SK-N-SH (cell line): ENCODE measurements at regions of chr12 and their contacts with region 1.

Region 1: DNA sequence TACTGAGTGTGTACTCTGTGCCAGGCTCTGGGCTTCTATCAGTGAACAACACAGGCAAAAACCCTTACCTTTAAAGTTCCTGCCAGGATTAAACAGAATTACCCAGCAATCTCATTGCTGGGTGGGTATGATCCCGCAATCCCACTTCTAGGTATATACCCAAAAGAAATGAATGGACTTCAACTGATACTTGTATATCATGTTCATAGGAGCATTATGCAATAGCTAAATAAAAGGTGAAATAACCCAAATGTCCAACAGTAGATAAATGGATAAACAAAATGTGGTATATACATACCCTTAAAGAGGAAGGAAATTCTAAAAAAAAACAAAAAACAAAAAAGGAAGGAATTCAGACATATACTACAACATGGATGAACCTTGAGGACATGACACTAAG is 14.7 kb downstream of the DAZAP2 start:
- DNase-seq: no peak
- H3K4me3 ChIP-seq: no peak overlapping the region
- H3K27ac ChIP-seq: no peak overlapping the region
- H3K4me1 ChIP-seq: no peaks in the 10 kb centered on the region
- H3K27me3 ChIP-seq: no peaks in the 10 kb centered on the region
- CTCF ChIP-seq: no peak
- EP300 ChIP-seq: no peak
- RAD21 ChIP-seq: no peak

Region 2: GRCh38 chr12:51160814-51161459 is 92.3 kb before region 1 on chr12:
- CTCF ChIA-PET with region 1: no interaction called
- POLR2A ChIA-PET with region 1: no interaction called
- DNase-seq: no peak
- H3K4me3 ChIP-seq: no peak overlapping the region
- H3K27ac ChIP-seq: no peak overlapping the region
- H3K4me1 ChIP-seq: no peaks in the 10 kb centered on the region
- H3K27me3 ChIP-seq: no peaks in the 10 kb centered on the region
- CTCF ChIP-seq: no peak
- EP300 ChIP-seq: no peak
- RAD21 ChIP-seq: no peak

Region 3: DNA sequence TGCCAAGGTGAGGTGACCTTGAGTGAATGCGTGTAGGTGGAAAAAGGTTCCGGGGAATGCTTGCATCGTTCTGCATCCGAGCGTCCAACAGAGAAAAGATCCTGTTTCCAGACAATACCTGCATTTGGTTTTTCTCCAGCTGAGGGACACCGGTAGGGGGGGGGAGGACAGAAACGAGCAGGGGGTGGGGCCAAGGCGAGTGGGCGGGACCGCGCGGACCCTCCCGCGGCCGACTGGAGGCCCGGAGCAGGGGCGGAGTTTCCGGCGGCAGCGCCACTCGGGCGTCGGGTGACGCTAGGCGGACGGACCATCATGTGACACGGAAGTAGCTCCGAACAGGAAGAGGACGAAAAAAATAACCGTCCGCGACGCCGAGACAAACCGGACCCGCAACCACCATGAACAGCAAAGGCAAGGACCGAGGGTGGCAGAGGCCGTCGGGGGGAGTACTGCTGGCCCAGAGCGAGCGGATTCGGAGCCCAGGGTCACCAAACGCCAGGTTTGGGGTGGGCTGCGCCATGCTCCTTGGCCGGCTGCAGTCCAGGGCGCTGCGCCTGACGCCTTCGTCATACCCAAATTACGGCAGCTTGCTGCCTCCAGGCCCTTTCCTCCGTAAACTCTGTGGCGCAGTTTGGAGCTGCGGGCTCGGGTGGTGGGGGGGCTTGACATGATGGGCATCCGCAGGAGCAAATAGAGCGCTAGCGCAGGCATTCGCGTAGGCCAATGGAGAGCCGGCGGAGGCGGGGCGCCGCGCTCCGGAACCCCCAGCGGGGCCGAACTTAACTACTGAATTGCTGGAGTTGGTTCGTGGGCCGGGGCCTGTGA is 14.6 kb before region 1 on chr12 and contains the start of gene DAZAP2:
- CTCF ChIA-PET with region 1: interaction called, 14 read pairs
- POLR2A ChIA-PET with region 1: interaction called, 4 read pairs
- DNase-seq: peak; percentile 96
- H3K4me3 ChIP-seq: peak within 1 kb of the TSS; percentile 90 to 95
- H3K27ac ChIP-seq: peak within 1 kb of the TSS; percentile 96 to 98
- H3K4me1 ChIP-seq: peaks cover 3 to 11% of the 10 kb centered on the region in 2 experiments; a peak in 2 of 4 replicates
- H3K27me3 ChIP-seq: no peaks in the 10 kb centered on the region
- CTCF ChIP-seq: no peak
- EP300 ChIP-seq: no peak
- RAD21 ChIP-seq: no peak
- polyA plus RNA-seq, gene DAZAP2: 274 and 325 TPM in 2 replicates